Aorta (tissue), 5 donors: ENCODE measurements at regions of chr7 and their contacts with region 1.

Region 1: GRCh38 chr7:137656227-137656849 is 190.4 kb downstream of the DGKI start:
- DNase-seq: peak; percentile 88 to 92
- ATAC-seq: peak; percentile 83
- H3K4me3 ChIP-seq: no peak overlapping the region
- H3K27ac ChIP-seq: peak overlapping the region in 1 of 2 donors; percentile 60
- H3K4me1 ChIP-seq: no peaks in the 10 kb centered on the region
- H3K27me3 ChIP-seq: no peaks in the 10 kb centered on the region

Region 2: GRCh38 chr7:137703291-137704010 is 47.1 kb after region 1 on chr7:
- intact Hi-C with region 1: no loop called
- DNase-seq: no peak
- ATAC-seq: no peak
- H3K4me3 ChIP-seq: no peak overlapping the region
- H3K27ac ChIP-seq: no peak overlapping the region
- H3K4me1 ChIP-seq: no peaks in the 10 kb centered on the region
- H3K27me3 ChIP-seq: no peaks in the 10 kb centered on the region

Region 3: DNA sequence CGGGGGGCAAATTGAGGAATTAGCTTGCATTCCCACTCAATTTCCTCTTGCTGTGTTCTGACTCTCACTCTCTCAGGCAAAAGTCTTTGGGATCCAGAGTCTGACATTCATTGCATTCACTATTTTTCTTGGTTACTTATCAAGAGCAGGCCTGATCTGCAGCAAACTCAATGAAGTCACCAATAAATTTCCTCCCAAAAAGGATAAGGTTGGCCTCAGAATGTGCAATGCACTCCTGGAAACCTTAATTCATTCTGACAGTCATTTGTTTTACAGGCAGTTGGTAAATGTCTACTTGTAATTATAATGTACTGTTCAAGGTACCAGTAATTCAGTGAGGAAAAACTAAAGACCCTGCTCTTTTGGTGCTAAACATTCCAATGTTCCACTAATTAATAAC is 196.7 kb after region 1 on chr7:
- intact Hi-C with region 1: no loop called
- DNase-seq: no peak
- ATAC-seq: no peak
- H3K4me3 ChIP-seq: no peak overlapping the region
- H3K27ac ChIP-seq: no peak overlapping the region
- H3K4me1 ChIP-seq: no peaks in the 10 kb centered on the region
- H3K27me3 ChIP-seq: no peaks in the 10 kb centered on the region

Region 4: GRCh38 chr7:138008547-138009349 is 352.4 kb after region 1 on chr7:
- intact Hi-C with region 1: loop called (anchors 2 to 5 kb)
- DNase-seq: no peak
- ATAC-seq: peak; percentile 86
- H3K4me3 ChIP-seq: no peak overlapping the region
- H3K27ac ChIP-seq: no peak overlapping the region
- H3K4me1 ChIP-seq: no peaks in the 10 kb centered on the region
- H3K27me3 ChIP-seq: no peaks in the 10 kb centered on the region